G401 (cell line): ENCODE measurements at regions of chr19 and their contacts with region 1.

Region 1: GRCh38 chr19:8444645-8445487 is at the start of gene HNRNPM:
- DNase-seq: peak; percentile 96
- total RNA-seq, gene HNRNPM: 101 and 123 TPM in 2 replicates

Region 2: DNA sequence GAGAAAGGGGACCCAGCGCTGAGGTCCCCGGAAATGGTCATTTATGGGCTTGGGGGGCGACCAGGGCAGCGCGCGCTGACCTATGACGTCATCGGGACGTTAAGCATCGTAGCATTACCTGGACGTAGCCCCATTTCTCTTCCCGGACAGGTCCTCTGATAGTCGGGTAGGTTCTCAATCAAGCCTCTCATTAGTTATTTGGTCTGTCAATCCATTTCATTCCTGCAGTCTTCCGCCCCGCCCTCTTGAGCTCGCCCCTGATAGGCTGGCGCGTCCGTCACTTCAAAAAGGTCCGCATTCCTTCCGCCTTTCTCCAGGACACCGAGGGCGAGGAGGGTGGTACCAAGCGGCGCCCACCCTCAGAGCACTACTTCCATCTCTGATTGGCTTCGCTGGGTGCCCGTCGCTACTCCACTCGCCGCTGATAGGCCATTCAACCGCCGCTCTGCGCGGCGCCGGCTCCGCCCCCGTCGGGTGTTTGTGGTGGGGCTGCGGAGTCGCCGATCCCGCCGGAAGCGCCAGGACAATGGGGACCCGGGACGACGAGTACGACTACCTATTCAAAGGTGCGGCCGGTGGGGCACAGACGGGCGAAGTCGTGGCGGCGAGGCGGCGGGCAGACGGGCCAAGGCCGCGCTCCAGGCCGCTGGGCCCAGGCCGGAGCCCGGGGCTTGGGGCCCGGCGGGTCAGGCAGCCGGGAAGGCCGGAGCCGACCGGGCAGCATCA is 54.8 kb before region 1 on chr19 and contains the start of gene RAB11B:
- in situ Hi-C with region 1: no loop called
- DNase-seq: peak; percentile 100
- total RNA-seq, gene RAB11B: 30.4 and 39.1 TPM in 2 replicates

Region 3: GRCh38 chr19:8526345-8527067 is 81.6 kb after region 1 on chr19:
- in situ Hi-C with region 1: loop called (anchors 10 kb)
- DNase-seq: peak; percentile 75